Heart right ventricle (tissue), 16 donors: ENCODE measurements at regions of chr16 and their contacts with region 1.

Region 1: DNA sequence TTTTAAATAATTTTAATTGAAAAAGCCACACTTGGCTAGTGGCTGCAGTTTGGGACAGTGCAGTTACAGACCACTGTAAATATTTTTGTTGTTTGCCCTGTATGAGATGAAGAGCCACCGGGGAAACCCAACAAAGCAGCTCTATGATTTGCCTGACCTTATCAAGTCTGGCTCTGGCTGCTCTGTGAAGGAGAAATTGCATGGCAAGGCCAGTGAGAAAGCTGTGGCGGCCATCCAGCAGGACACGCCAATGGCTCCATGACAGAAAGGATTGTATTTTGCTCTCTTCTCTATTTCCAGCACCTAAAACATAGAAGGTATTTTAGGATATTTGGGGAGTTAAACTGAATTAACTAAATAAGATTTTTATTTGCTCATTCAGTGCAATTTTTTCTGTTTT is 330.0 kb upstream of the DYNLRB2 start:
- DNase-seq: peak in 1 of 2 donors; percentile 44
- ATAC-seq: peak in 1 of 8 donors; percentile 59
- H3K4me3 ChIP-seq: no peak overlapping the region
- H3K27ac ChIP-seq: no peak overlapping the region
- H3K4me1 ChIP-seq: no peaks in the 10 kb centered on the region
- H3K27me3 ChIP-seq: no peaks in the 10 kb centered on the region
- CTCF ChIP-seq: no peak

Region 2: DNA sequence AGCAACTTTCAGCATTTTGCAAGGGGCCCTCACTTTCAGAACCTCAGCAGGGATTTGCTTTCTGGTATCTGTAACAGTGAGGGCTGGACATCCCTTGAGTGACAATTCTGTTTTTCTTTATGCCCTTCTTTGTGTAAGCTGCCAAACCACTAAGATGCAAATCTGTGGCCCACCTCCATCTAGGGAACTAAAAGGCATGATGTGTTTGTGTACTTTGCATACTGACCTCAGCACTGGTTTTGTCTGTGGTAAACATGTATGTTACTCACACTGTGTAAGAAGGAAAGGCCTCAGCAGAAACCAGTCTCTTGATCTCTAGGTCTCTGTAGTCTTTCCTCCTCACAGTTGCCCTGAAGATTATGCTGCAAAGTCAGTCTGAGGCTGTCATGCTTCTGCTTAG is 66.6 kb before region 1 on chr16:
- intact Hi-C with region 1: no loop called
- DNase-seq: no peak
- ATAC-seq: no peak
- H3K4me3 ChIP-seq: no peak overlapping the region
- H3K27ac ChIP-seq: no peak overlapping the region
- H3K4me1 ChIP-seq: no peaks in the 10 kb centered on the region
- H3K27me3 ChIP-seq: peaks cover 0 to 6% (median 0%) of the 10 kb centered on the region in 7 donors
- CTCF ChIP-seq: no peak

Region 3: GRCh38 chr16:80427795-80428194 is 217.0 kb after region 1 on chr16:
- intact Hi-C with region 1: loop called in 1 of 10 experiments (anchors 5 kb)
- DNase-seq: no peak
- ATAC-seq: no peak
- H3K4me3 ChIP-seq: no peak overlapping the region
- H3K27ac ChIP-seq: no peak overlapping the region
- H3K4me1 ChIP-seq: no peaks in the 10 kb centered on the region
- H3K27me3 ChIP-seq: peaks cover 0 to 9% (median 0%) of the 10 kb centered on the region in 7 donors
- CTCF ChIP-seq: no peak